Cardiac septum (tissue), 1 donor: ENCODE measurements at regions of chr18 and their contacts with region 1.

Region 1: DNA sequence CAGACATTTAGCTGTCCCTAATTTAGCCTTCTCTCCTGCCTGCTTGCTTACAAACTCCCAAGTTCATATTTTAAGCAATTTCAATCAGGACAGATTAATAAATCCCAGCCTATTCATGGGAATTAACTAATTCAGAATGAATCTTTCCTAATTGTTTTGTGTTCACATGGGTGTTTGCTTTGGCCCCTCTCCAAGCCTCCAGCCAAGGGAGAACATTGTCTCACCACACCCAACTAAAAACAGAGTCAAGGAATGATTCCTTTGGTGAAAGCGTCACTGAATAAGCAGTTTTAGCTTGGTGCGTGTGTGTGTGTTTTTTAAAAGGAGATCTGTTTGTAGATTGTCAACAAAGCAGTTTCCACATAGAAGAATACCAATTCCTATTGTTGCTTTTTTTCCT is 43.0 kb upstream of the DSG1 start:
- DNase-seq: no peak

Region 2: GRCh38 chr18:31399306-31400032 is 124.6 kb after region 1 on chr18:
- intact Hi-C with region 1: no loop called
- DNase-seq: no peak

Region 3: DNA sequence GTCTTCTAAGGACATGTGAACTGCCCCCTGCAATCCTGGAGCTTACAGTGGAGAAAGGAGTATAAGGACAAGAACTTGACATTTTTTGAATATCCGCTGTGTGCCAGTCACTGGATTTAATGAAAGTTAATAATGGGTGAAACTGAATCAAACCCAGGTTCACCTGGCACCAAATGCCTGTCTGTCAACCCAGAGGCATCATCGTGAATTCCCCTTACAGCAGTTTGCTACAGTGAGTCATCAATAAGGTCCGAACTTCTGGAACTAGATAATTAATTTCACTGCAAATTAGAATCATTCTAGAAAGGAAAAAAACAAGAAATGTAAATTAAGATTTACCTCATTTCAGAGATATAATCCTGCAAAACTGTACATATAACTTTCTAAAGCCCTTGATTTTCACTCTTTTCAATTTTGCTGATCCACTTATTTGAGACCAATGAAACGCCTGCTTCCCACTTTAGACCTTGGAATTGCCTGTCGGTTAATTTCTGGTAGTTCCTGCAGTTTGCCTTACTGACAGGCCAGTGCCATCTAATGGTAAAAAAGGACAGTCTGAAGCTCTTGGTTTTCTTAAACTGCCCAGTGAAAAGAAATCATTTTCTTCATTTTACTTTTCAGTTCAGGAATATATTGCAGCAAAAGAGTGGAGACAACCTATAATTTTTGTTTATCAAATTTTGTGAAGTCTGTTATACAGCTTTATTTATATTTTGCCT is 231.3 kb after region 1 on chr18:
- intact Hi-C with region 1: loop called (anchors 10 kb)
- DNase-seq: no peak

Region 4: DNA sequence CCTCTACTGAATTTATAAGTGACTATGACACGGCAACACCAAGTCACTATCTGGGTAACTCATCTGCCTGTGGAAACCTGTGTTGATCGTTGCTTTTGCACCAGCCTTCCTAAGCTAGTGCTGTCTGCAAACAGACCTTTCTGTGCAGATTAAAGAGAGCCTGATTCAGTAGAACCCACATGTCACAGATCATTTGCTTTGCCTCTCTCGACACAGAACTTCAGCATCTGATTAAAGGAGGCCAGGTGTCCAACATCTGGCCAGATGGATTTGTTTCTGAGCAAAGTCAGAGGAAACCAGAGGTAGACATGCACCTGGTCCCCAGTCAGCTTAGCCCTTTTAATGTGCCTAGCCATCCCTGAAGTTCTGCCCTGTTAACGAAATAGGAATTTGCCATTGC is 301.8 kb after region 1 on chr18:
- intact Hi-C with region 1: no loop called
- DNase-seq: no peak